PC-3 (cell line): ENCODE measurements at regions of chr1 and their contacts with region 1.

Region 1: GRCh38 chr1:246117066-246117791 is 389.9 kb downstream of the SMYD3 start:
- DNase-seq: peak; percentile 60
- ATAC-seq: peak; percentile 99
- H3K4me3 ChIP-seq: no peak overlapping the region
- H3K27ac ChIP-seq: no peak overlapping the region
- H3K4me1 ChIP-seq: no peaks in the 10 kb centered on the region
- H3K27me3 ChIP-seq: no peaks in the 10 kb centered on the region
- CTCF ChIP-seq: peak; percentile 64

Region 2: GRCh38 chr1:245322673-245323441 is 794.4 kb before region 1 on chr1:
- CTCF ChIA-PET with region 1: no interaction called
- POLR2A ChIA-PET with region 1: no interaction called
- intact Hi-C with region 1: loop called (anchors 5 kb)
- DNase-seq: peak; percentile 71
- ATAC-seq: peak; percentile 88
- H3K4me3 ChIP-seq: no peak overlapping the region
- H3K27ac ChIP-seq: no peak overlapping the region
- H3K4me1 ChIP-seq: no peaks in the 10 kb centered on the region; the same call in 1 of the 2 replicates
- H3K27me3 ChIP-seq: peaks cover 53% of the 10 kb centered on the region
- CTCF ChIP-seq: peak; percentile 54

Region 3: GRCh38 chr1:246012341-246012740 is 104.9 kb before region 1 on chr1:
- CTCF ChIA-PET with region 1: no interaction called
- POLR2A ChIA-PET with region 1: no interaction called
- intact Hi-C with region 1: loop called (anchors 1 kb)
- DNase-seq: peak; percentile 66
- ATAC-seq: peak; percentile 49
- H3K4me3 ChIP-seq: no peak overlapping the region
- H3K27ac ChIP-seq: no peak overlapping the region
- H3K4me1 ChIP-seq: no peaks in the 10 kb centered on the region
- H3K27me3 ChIP-seq: no peaks in the 10 kb centered on the region
- CTCF ChIP-seq: peak; percentile 85

Region 4: GRCh38 chr1:246139745-246140182 is 22.5 kb after region 1 on chr1:
- CTCF ChIA-PET with region 1: no interaction called
- POLR2A ChIA-PET with region 1: interaction called, 15 read pairs
- intact Hi-C with region 1: no loop called
- DNase-seq: peak; percentile 97
- ATAC-seq: peak; percentile 78
- H3K4me3 ChIP-seq: peak overlapping the region; percentile 21; the same call in 1 of the 2 replicates
- H3K27ac ChIP-seq: peak overlapping the region; percentile 96
- H3K4me1 ChIP-seq: peaks cover 52% of the 10 kb centered on the region
- H3K27me3 ChIP-seq: no peaks in the 10 kb centered on the region
- CTCF ChIP-seq: no peak

Region 5: DNA sequence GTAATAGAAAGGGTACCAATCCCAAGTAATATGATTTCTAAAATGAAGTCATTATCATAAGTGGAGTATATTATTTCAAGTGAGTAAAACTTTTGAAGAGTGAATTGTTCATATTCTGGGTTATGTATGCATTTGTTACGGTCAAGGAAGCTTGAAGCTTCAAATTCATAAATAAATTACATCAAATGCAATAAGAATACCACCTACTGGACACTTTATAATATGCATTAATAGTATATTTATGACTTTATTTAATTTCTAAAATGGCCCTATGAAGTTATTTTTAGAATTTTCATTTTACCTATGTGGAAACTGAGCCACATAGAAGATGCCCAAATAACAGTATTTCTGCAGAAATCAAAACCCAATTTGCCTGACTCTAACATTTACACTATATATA is 129.2 kb after region 1 on chr1:
- CTCF ChIA-PET with region 1: no interaction called
- POLR2A ChIA-PET with region 1: no interaction called
- intact Hi-C with region 1: loop called (anchors 5 kb)
- DNase-seq: peak; percentile 10
- ATAC-seq: no peak
- H3K4me3 ChIP-seq: no peak overlapping the region
- H3K27ac ChIP-seq: no peak overlapping the region
- H3K4me1 ChIP-seq: no peaks in the 10 kb centered on the region
- H3K27me3 ChIP-seq: no peaks in the 10 kb centered on the region
- CTCF ChIP-seq: peak; percentile 47; the same call in 1 of the 2 replicates

Region 6: DNA sequence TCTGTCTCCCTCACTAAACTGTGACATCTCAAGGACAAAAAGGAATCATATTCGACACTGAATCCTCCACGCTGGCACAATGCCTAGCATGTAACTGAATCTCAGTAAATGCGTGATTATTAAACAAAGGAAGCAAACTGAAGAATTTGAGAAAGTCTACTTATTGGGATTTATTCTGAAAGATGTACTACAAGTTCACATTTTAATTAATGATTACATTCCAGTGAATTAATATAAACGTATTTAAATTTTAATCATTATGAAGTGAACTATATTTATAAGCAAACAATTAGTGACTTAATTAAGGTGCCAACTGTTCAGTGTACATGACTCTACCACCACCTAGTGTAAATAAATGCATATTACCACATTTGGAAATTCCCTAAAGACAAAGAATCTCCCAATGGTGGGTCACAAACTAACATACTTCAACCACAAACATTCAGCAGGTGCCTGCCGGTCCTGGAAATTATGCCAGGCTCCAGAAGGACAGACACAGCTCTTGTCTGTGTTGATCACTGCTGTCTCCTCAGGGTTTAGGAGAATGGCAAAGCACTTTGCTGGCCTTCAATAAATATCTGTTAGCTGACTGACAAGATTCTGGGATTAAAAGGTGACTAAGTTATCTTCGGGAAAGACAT is 333.5 kb after region 1 on chr1:
- CTCF ChIA-PET with region 1: no interaction called
- POLR2A ChIA-PET with region 1: no interaction called
- intact Hi-C with region 1: loop called (anchors 10 kb)
- DNase-seq: peak; percentile 52
- ATAC-seq: peak; percentile 39; the same call in 1 of the 2 replicates
- H3K4me3 ChIP-seq: no peak overlapping the region
- H3K27ac ChIP-seq: no peak overlapping the region
- H3K4me1 ChIP-seq: no peaks in the 10 kb centered on the region
- H3K27me3 ChIP-seq: no peaks in the 10 kb centered on the region
- CTCF ChIP-seq: peak; percentile 94